ENCODE measurements at regions of chr13 and their contacts with region 1.

Region 1: GRCh38 chr13:51557875-51558612 is 26.2 kb upstream of the WDFY2 start:
- DNase-seq: peak; percentile 86
- H3K4me3 ChIP-seq: peak overlapping the region in 1 of 3 experiments; percentile 24
- H3K27ac ChIP-seq: peak overlapping the region; percentile 73
- H3K4me1 ChIP-seq: peaks cover 35% of the 10 kb centered on the region
- H3K27me3 ChIP-seq: no peaks in the 10 kb centered on the region
- CTCF ChIP-seq: no peak

Region 2: GRCh38 chr13:51479199-51479523 is 78.9 kb before region 1 on chr13:
- CTCF ChIA-PET with region 1: no interaction called
- dilution Hi-C with region 1: no loop called
- in situ Hi-C with region 1: no loop called
- intact Hi-C with region 1: loop called (anchors 5 kb)
- DNase-seq: peak; percentile 60
- H3K4me3 ChIP-seq: no peak overlapping the region
- H3K27ac ChIP-seq: no peak overlapping the region
- H3K4me1 ChIP-seq: peaks cover 13% of the 10 kb centered on the region
- H3K27me3 ChIP-seq: no peaks in the 10 kb centered on the region
- CTCF ChIP-seq: no peak

Region 3: GRCh38 chr13:51523082-51523518 is 34.9 kb before region 1 on chr13:
- CTCF ChIA-PET with region 1: interaction called, 3 read pairs
- dilution Hi-C with region 1: no loop called
- in situ Hi-C with region 1: no loop called
- intact Hi-C with region 1: loop called (anchors 5 kb)
- DNase-seq: peak; percentile 77
- H3K4me3 ChIP-seq: no peak overlapping the region
- H3K27ac ChIP-seq: peak overlapping the region; percentile 63
- H3K4me1 ChIP-seq: peaks cover 38% of the 10 kb centered on the region
- H3K27me3 ChIP-seq: no peaks in the 10 kb centered on the region
- CTCF ChIP-seq: no peak

Region 4: GRCh38 chr13:51577680-51578079 is 19.6 kb after region 1 on chr13:
- CTCF ChIA-PET with region 1: no interaction called
- dilution Hi-C with region 1: no loop called
- in situ Hi-C with region 1: no loop called
- intact Hi-C with region 1: loop called (anchors 1 kb)
- DNase-seq: peak; percentile 58
- H3K4me3 ChIP-seq: peak overlapping the region in 2 of 3 experiments; percentile 6 to 46
- H3K27ac ChIP-seq: peak overlapping the region; percentile 80
- H3K4me1 ChIP-seq: peaks cover 20% of the 10 kb centered on the region
- H3K27me3 ChIP-seq: no peaks in the 10 kb centered on the region
- CTCF ChIP-seq: no peak

Measured in mammary epithelial cell (primary cell).